Activated CD8-positive, alpha-beta memory T cell treated with anti-CD3 and anti-CD28 coated beads, Interleukin-2, amount 10 ng/mL, durations not matched to agents 7 days and 5 days (primary cell): ENCODE measurements at regions of chr1 and their contacts with region 1.

Region 1: GRCh38 chr1:47179017-47179987 is 10.5 kb downstream of the PDZK1IP1 start:
- DNase-seq: peak; percentile 88
- ATAC-seq: peak; percentile 88
- H3K4me3 Mint-ChIP-seq: peak overlapping the region; percentile 73
- H3K27ac Mint-ChIP-seq: peak overlapping the region; percentile 79
- H3K4me1 Mint-ChIP-seq: peaks cover 10% of the 10 kb centered on the region
- H3K27me3 Mint-ChIP-seq: peaks cover 28% of the 10 kb centered on the region

Region 2: GRCh38 chr1:46903481-46903880 is 275.8 kb before region 1 on chr1:
- CTCF ChIA-PET with region 1: no interaction called
- DNase-seq: no peak
- ATAC-seq: no peak
- H3K4me3 Mint-ChIP-seq: no peak overlapping the region
- H3K27ac Mint-ChIP-seq: no peak overlapping the region
- H3K4me1 Mint-ChIP-seq: no peaks in the 10 kb centered on the region
- H3K27me3 Mint-ChIP-seq: peaks cover 5% of the 10 kb centered on the region

Region 3: GRCh38 chr1:47031108-47031457 is 148.2 kb before region 1 on chr1:
- CTCF ChIA-PET with region 1: no interaction called
- DNase-seq: no peak
- ATAC-seq: no peak
- H3K4me3 Mint-ChIP-seq: no peak overlapping the region
- H3K27ac Mint-ChIP-seq: no peak overlapping the region
- H3K4me1 Mint-ChIP-seq: no peaks in the 10 kb centered on the region
- H3K27me3 Mint-ChIP-seq: peaks cover 26% of the 10 kb centered on the region

Region 4: DNA sequence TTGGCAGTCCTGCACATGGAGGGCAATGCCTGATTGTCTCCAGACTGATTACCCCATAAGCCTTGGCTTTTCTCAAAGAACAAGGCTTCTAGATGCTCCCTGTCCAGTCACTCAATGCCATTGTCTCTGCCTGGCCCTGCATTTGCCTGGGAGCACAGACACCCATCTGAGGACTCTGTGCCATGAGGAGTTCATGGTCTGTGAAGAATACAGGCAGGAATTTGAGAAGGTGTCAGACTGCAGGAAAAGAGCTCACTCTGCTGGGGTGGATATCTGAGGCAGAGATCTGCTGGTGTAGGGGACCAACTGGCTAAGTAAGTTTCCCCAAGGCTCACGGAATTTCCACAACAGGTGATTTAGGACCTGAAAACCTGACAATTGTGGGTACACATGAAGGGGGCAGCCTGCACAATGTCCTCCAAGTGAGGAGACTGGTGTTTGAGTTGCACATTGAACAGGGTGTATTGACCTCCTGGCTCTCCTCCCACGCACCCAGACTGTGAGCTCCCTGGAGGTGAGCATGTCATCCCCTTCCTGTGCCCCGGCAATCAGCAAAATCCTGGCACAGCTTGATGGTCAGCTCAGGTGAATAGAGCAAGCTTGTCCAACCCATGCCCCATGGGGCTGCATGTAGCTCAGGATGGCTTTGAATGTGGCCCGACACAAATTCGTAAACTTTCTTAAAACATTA is 41.2 kb before region 1 on chr1:
- CTCF ChIA-PET with region 1: no interaction called
- DNase-seq: no peak
- ATAC-seq: no peak
- H3K4me3 Mint-ChIP-seq: no peak overlapping the region
- H3K27ac Mint-ChIP-seq: no peak overlapping the region
- H3K4me1 Mint-ChIP-seq: no peaks in the 10 kb centered on the region
- H3K27me3 Mint-ChIP-seq: peaks cover 13% of the 10 kb centered on the region

Region 5: DNA sequence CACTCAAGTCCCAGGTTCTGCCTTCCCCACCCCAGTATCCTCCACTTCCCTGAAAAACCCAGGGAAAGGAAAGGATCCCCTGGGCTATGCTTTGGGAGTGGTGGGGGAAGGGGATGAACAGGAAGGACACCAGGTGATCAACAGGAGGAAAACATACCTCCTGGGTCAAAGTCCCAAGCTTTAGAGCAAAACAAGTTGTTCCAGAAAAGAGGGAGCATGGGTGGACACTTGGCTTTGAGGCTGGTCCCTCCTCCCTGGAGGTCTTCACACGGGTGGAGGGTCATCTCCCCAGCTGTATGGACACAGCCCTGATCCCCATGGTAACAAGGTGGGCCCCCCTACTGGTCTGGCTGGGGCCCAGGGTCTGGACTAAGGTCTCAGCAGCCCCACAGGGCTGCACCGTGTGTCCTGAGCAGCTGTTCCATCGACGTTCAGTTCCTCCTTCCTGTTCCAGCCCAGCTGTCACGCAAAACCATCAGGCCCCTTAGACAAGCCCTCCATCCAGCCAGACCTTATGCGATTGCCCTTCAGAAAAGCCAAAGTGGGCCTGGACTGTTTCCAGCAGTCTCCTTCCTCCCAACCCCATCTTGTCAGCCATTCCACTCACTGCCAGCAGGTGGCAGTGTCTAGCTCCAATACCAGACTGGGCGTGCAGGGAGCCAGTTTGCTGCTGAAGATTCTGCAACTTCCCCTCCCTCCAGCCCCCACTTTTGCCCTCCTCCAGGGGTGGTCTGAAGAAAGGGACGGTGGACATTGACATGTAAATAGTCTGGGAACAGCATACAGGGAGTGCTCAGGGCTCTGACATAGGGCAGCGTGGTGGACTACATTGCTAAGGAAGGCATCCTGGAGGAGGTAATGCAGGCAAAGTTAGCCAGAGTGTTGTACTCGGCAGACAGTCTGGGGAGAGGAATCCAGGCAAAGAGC is 13.4 kb after region 1 on chr1:
- CTCF ChIA-PET with region 1: interaction called, 107 read pairs
- DNase-seq: peak; percentile 75
- ATAC-seq: peak; percentile 82
- H3K4me3 Mint-ChIP-seq: no peak overlapping the region
- H3K27ac Mint-ChIP-seq: no peak overlapping the region
- H3K4me1 Mint-ChIP-seq: no peaks in the 10 kb centered on the region
- H3K27me3 Mint-ChIP-seq: peaks cover 9% of the 10 kb centered on the region

Region 6: DNA sequence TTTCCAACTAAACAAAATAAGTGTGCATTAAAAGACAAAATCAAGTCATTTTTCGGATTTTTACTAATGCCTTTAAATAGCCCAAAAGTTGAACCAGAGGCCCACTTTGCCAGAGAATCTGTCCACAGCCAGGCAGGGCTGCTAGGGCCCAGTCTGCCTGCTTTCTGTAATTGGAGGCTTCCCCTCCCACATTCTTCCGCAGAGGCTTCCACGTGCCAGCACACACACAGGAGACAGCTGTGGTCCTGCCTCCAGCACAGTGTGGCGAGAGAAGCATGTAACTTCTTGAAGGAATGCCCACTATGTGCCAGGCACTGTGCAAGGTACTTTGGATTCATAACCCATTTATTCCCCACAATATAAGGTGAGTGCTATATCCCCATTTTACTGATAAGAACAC is 21.9 kb after region 1 on chr1:
- CTCF ChIA-PET with region 1: interaction called, 13 read pairs
- DNase-seq: no peak
- ATAC-seq: no peak
- H3K4me3 Mint-ChIP-seq: no peak overlapping the region
- H3K27ac Mint-ChIP-seq: no peak overlapping the region
- H3K4me1 Mint-ChIP-seq: no peaks in the 10 kb centered on the region
- H3K27me3 Mint-ChIP-seq: peaks cover 50% of the 10 kb centered on the region

Region 7: DNA sequence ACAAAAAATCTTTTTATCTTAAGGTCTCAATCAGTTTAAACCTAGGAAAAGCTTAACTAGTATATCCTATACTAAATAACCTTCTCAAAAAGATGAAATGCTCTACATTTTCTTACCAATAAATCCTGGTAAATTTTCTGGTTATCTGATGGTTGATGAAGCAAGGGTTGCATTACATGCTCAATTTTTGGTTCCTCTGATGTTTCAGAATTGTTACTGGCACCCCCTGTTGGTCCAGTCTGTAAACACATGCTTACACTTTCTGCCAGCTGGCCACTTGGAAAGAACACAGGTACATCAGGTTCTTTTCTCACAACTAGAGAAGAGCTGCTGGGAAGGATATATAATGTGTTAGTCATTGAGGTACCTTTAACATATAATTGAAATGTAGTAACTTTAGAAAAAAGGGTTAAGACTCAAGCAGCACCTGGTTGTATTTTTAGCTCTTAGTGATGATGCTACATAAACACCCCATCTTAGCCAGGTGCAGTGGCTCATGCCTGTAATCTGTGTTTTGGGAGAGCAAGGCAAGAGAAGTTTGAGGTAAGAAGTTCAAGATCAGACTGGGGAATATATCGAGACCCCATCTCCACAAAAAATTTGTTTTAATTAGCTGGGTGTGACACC is 83.6 kb after region 1 on chr1:
- CTCF ChIA-PET with region 1: interaction called, 33 read pairs
- DNase-seq: peak; percentile 61
- ATAC-seq: peak; percentile 53
- H3K4me3 Mint-ChIP-seq: no peak overlapping the region
- H3K27ac Mint-ChIP-seq: no peak overlapping the region
- H3K4me1 Mint-ChIP-seq: no peaks in the 10 kb centered on the region
- H3K27me3 Mint-ChIP-seq: no peaks in the 10 kb centered on the region

Region 8: DNA sequence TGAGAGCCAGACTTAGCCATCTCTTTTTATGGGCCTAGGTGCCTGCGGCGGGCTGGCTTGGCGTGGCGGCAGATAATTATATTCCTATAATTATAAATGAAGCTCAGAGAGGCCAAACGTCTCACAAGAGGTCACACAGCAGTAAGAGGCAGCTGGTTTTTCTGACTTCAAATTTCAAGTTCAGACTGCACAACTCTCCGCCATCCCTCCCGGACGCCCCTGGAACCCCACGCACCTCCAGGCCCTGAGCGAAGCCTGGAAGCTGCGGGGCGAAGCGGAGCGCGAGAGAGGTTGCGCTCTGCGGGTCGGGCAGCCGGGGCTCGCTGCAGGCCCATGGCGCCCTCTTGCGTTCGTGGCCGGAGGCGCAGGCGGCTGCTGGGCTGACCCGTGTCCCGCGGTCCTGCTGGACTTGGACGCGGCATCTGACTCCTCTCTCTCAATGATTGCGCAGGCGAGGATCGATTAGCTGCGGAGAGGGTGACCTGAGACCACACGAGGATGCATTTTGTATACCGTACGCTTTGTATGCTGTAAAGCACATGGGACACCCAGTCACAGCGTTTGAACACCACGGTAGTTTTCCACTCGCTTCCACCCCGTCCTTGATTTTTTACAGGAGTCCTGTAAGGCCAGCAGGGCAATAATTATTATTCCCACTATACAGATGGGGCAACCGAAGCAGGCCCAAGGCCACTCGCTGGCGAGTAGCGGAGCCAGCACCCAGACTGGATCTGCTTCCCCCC is 531.2 kb after region 1 on chr1:
- CTCF ChIA-PET with region 1: interaction called, 10 read pairs
- DNase-seq: peak; percentile 70
- ATAC-seq: peak; percentile 82
- H3K4me3 Mint-ChIP-seq: no peak overlapping the region
- H3K27ac Mint-ChIP-seq: no peak overlapping the region
- H3K4me1 Mint-ChIP-seq: peaks cover 5% of the 10 kb centered on the region
- H3K27me3 Mint-ChIP-seq: peaks cover 80% of the 10 kb centered on the region

Region 9: DNA sequence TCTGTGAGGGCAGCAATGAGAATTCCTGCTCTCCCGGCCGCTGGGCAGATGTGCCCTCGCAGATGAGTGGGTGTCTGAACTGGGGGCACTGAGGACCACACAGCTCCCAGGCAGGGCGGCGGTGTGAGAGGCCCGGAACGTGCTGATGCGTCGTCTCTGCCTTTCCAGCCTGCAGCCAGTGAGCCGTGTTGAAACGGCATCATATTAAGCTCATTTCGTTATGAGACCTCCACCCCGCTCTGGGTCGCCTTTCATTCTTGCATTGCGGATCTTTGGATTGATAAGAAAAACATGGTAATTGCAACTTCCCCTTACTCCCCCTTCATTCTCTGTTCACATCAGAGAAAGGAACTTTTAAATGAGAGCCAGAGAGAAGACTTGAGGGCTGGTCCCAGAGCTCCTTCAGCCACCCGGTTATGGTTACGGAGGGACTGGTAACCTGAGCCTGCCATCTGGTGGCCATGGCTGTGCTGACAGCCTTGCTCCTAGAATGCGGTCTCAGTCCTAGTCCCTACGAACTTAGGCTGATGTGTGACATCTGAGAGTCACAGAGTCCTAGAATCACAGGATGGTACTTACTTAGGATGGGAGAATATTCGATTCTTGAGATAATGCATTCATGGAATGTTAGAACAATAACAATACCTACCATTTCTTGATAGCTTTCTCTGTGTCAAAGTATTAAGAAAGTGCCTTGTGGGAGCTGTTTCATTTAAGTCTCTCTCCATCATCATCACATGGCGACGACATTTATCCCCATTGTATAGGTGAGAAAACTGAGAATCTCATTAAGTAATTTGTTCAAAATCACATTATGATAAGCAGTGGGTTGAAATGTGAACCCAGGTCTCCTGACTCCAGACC is 546.9 kb after region 1 on chr1:
- CTCF ChIA-PET with region 1: interaction called, 10 read pairs
- DNase-seq: peak; percentile 77
- ATAC-seq: peak; percentile 92
- H3K4me3 Mint-ChIP-seq: no peak overlapping the region
- H3K27ac Mint-ChIP-seq: no peak overlapping the region
- H3K4me1 Mint-ChIP-seq: peaks cover 3% of the 10 kb centered on the region
- H3K27me3 Mint-ChIP-seq: peaks cover 53% of the 10 kb centered on the region